ENCODE measurements at regions of chr7 and their contacts with region 1.

Region 1: DNA sequence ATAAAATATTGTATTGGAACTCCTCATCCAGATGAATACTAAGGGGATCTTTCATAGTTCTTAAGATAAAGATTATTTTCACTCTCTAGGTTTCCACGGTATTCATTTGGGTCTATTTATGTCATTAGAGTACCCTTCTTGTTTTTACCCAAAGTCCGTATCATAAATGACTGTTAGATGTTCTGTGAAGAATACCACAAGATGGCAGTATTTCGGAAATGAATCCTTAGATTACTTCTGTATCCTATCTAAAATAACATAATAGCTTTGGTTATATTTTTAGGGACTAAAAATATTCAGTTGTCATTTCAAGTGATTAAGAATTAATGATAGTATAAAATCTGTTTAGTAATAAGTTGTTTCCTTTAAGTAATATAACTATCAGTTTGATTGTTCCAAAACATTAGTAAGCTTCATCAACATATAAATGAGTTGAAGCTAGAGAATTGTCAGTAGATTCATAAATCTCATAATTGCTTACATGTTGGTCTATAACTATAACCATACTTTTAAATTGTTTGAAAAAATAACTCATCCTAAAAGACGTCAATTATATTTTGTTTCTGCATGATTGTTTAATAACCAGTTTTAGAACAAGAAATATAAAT is 337.5 kb upstream of the KCND2 start:
- DNase-seq: no peak
- ATAC-seq: peak; percentile 47
- H3K4me3 Mint-ChIP-seq: no peak overlapping the region
- H3K27ac Mint-ChIP-seq: no peak overlapping the region
- H3K4me1 Mint-ChIP-seq: no peaks in the 10 kb centered on the region
- H3K27me3 Mint-ChIP-seq: no peaks in the 10 kb centered on the region; the same call in 1 of the 2 replicates
- CTCF ChIP-seq: peak; percentile 15; the same call in 1 of the 2 replicates

Region 2: GRCh38 chr7:119949053-119949452 is 13.5 kb after region 1 on chr7:
- CTCF ChIA-PET with region 1: no interaction called
- POLR2A ChIA-PET with region 1: no interaction called
- DNase-seq: no peak
- ATAC-seq: no peak
- H3K4me3 Mint-ChIP-seq: no peak overlapping the region
- H3K27ac Mint-ChIP-seq: no peak overlapping the region
- H3K4me1 Mint-ChIP-seq: 0 out of 2 replicates have a peak, but pooled peaks cover 5% of the 10 kb centered on the region
- H3K27me3 Mint-ChIP-seq: no peaks in the 10 kb centered on the region
- CTCF ChIP-seq: no peak

Region 3: GRCh38 chr7:120272261-120272660 is 336.7 kb after region 1 on chr7:
- CTCF ChIA-PET with region 1: interaction called, 13 read pairs
- POLR2A ChIA-PET with region 1: no interaction called
- DNase-seq: peak; percentile 34
- ATAC-seq: peak; percentile 37
- H3K4me3 Mint-ChIP-seq: peak overlapping the region; percentile 98
- H3K27ac Mint-ChIP-seq: no peak overlapping the region
- H3K4me1 Mint-ChIP-seq: peaks cover 41% of the 10 kb centered on the region
- H3K27me3 Mint-ChIP-seq: peaks cover 21% of the 10 kb centered on the region
- CTCF ChIP-seq: peak; percentile 57

Measured in WTC11 (cell line).